ENCODE measurements at regions of chr13 and their contacts with region 1.

Region 1: DNA sequence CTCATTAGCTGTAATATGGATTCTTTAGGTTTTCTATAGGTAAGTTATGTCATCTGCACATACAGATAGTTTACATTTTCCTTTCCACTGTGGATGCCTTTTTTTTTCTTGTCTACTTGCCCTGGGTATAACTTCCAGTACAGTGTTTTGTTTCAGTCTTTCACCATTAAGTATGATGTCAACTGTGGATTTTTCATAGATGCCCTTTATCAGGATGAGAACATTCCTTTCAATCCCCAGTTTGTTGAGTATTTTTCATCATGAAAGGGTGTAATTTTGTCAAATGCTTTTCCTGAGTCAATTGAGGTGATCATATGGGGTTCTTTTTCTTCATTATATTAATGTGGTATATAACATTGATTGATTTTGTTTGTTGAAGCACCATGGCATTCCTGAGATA is 43.6 kb upstream of the SACS start:
- DNase-seq: no peak
- H3K4me3 ChIP-seq: no peak overlapping the region
- H3K27ac ChIP-seq: no peak overlapping the region
- H3K4me1 ChIP-seq: no peaks in the 10 kb centered on the region
- H3K27me3 ChIP-seq: no peaks in the 10 kb centered on the region
- CTCF ChIP-seq: no peak
- POLR2A ChIP-seq: no peak

Region 2: DNA sequence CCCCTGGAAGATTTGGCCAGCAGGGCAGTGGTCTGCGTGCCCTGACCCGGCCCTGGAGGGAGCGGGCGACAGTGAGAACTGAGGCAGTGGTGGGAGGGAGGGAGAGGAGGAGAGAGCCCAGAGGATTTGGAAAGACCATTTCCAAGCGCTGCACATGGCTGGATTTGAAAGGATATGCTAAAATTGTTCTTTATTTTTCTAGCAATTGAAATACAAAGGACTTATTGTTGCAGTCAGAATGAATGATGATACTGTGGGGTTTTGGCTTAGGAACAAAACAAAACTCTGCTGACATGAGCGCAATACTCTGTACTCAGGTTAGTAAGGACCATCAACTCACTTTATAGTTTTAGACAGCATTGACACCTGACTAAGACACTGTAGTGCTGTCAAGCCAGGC is 162.6 kb after region 1 on chr13:
- intact Hi-C with region 1: loop called (anchors 5 kb)
- DNase-seq: no peak
- H3K4me3 ChIP-seq: no peak overlapping the region
- H3K27ac ChIP-seq: no peak overlapping the region
- H3K4me1 ChIP-seq: no peaks in the 10 kb centered on the region
- H3K27me3 ChIP-seq: no peaks in the 10 kb centered on the region
- CTCF ChIP-seq: no peak
- POLR2A ChIP-seq: no peak

Measured in prostate gland (tissue), 2 donors.